Heart right ventricle (tissue), 16 donors: ENCODE measurements at regions of chr2 and their contacts with region 1.

Region 1: GRCh38 chr2:96554293-96555145 is 18.0 kb downstream of the ARID5A start:
- DNase-seq: peak; percentile 69 to 81
- ATAC-seq: peak; percentile 49 to 81 (median 68)
- H3K4me3 ChIP-seq: peak overlapping the region in 2 of 10 donors; percentile 10 to 25
- H3K27ac ChIP-seq: peak overlapping the region in 1 of 10 donors; percentile 21
- H3K4me1 ChIP-seq: peaks cover 6 to 15% (median 12%) of the 10 kb centered on the region in 9 donors
- H3K27me3 ChIP-seq: no peaks in the 10 kb centered on the region
- CTCF ChIP-seq: peak; percentile 80 to 99 (median 96)

Region 2: GRCh38 chr2:96452053-96452452 is 102.5 kb before region 1 on chr2:
- intact Hi-C with region 1: loop called in 1 of 10 experiments (anchors 1 kb)
- DNase-seq: no peak
- ATAC-seq: no peak
- H3K4me3 ChIP-seq: no peak overlapping the region
- H3K27ac ChIP-seq: no peak overlapping the region
- H3K4me1 ChIP-seq: peaks cover 0 to 10% (median 0%) of the 10 kb centered on the region in 9 donors
- H3K27me3 ChIP-seq: no peaks in the 10 kb centered on the region
- CTCF ChIP-seq: no peak

Region 3: DNA sequence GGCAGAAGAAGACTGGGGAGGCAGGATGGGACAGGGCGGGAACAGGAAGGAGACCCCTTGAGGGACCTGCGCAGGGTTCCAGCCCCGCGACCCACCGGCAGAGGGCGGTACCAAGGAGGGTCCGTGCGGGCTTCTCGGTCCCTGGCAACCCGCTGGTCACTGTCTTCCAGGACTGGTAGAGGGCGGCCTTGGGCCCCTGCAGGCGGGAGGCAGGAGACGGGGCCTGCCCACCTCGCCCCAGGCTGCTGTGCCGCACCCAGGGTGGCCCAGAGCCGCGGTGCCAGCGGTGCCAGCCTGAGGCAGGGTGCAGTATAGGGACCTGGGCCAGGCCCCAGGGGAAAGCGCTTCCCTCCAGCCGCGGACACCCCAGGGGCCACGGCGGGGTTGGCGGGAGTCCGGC is 83.9 kb before region 1 on chr2:
- intact Hi-C with region 1: loop called in 1 of 10 experiments (anchors 5 kb)
- DNase-seq: peak; percentile 61 to 75
- ATAC-seq: peak; percentile 76 to 93 (median 86)
- H3K4me3 ChIP-seq: peak overlapping the region in 8 of 10 donors; percentile 13 to 45 (median 38)
- H3K27ac ChIP-seq: peak overlapping the region in 1 of 10 donors; percentile 19
- H3K4me1 ChIP-seq: peaks cover 0 to 12% (median 7%) of the 10 kb centered on the region in 9 donors
- H3K27me3 ChIP-seq: peaks cover 0 to 9% (median 0%) of the 10 kb centered on the region in 7 donors
- CTCF ChIP-seq: peak; percentile 38 to 78 (median 69)

Region 4: GRCh38 chr2:96527286-96528005 is 27.1 kb before region 1 on chr2:
- intact Hi-C with region 1: loop called in 1 of 10 experiments (anchors 1 kb)
- DNase-seq: peak; percentile 59 to 60
- ATAC-seq: peak in 5 of 8 donors; percentile 15 to 25 (median 19)
- H3K4me3 ChIP-seq: peak overlapping the region; percentile 41 to 63 (median 58)
- H3K27ac ChIP-seq: peak overlapping the region; percentile 46 to 100 (median 94)
- H3K4me1 ChIP-seq: peaks cover 25 to 73% (median 52%) of the 10 kb centered on the region in 9 donors
- H3K27me3 ChIP-seq: no peaks in the 10 kb centered on the region
- CTCF ChIP-seq: peak in 7 of 9 donors; percentile 29 to 64 (median 51)

Region 5: GRCh38 chr2:96602330-96602823 is 47.9 kb after region 1 on chr2:
- intact Hi-C with region 1: no loop called
- DNase-seq: no peak
- ATAC-seq: no peak
- H3K4me3 ChIP-seq: no peak overlapping the region
- H3K27ac ChIP-seq: no peak overlapping the region
- H3K4me1 ChIP-seq: peaks cover 0 to 35% (median 9%) of the 10 kb centered on the region in 9 donors
- H3K27me3 ChIP-seq: no peaks in the 10 kb centered on the region
- CTCF ChIP-seq: no peak